Body of pancreas (tissue), 4 donors: ENCODE measurements at regions of chr9 and their contacts with region 1.

Region 1: DNA sequence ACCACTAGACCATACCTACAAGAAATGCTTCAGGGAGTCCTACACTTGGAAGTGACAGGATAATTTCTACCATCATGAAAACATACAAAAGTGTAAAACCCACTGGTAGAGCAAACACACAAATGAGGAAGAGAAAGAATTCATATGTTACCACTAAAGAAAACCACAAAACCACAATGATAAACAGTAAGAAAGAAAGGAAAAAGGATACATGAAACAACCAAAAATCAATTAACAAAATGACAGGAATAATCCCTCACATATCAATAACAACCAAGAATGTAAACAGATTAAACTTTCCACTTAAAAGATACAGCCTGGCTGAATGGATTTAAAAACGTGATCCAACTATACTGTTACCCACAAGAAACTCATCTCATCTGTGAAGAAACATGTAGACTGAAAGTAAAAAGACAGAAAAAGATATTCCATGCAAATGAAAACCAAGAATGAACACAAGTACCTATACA is 83.4 kb downstream of the LPAR1 start:
- DNase-seq: no peak
- ATAC-seq: no peak
- H3K4me3 ChIP-seq: no peak overlapping the region
- H3K27ac ChIP-seq: no peak overlapping the region
- H3K4me1 ChIP-seq: no peaks in the 10 kb centered on the region
- H3K27me3 ChIP-seq: no peaks in the 10 kb centered on the region
- CTCF ChIP-seq: no peak
- POLR2A ChIP-seq: no peak

Region 2: GRCh38 chr9:110179734-110180133 is 775.1 kb before region 1 on chr9:
- intact Hi-C with region 1: loop called (anchors 10 kb)
- DNase-seq: no peak
- ATAC-seq: no peak
- H3K4me3 ChIP-seq: no peak overlapping the region
- H3K27ac ChIP-seq: no peak overlapping the region
- H3K4me1 ChIP-seq: peaks cover 19% of the 10 kb centered on the region
- H3K27me3 ChIP-seq: no peaks in the 10 kb centered on the region
- CTCF ChIP-seq: no peak
- POLR2A ChIP-seq: no peak

Region 3: GRCh38 chr9:110842169-110842568 is 112.7 kb before region 1 on chr9:
- intact Hi-C with region 1: no loop called
- DNase-seq: peak in 3 of 4 donors; percentile 7 to 18 (median 14)
- ATAC-seq: no peak
- H3K4me3 ChIP-seq: no peak overlapping the region
- H3K27ac ChIP-seq: no peak overlapping the region
- H3K4me1 ChIP-seq: no peaks in the 10 kb centered on the region
- H3K27me3 ChIP-seq: no peaks in the 10 kb centered on the region
- CTCF ChIP-seq: peak in 5 of 7 experiments; percentile 9 to 50 (median 41)
- POLR2A ChIP-seq: no peak

Region 4: GRCh38 chr9:110869931-110870330 is 84.9 kb before region 1 on chr9:
- intact Hi-C with region 1: loop called (anchors 10 kb)
- DNase-seq: no peak
- ATAC-seq: no peak
- H3K4me3 ChIP-seq: no peak overlapping the region
- H3K27ac ChIP-seq: no peak overlapping the region
- H3K4me1 ChIP-seq: no peaks in the 10 kb centered on the region
- H3K27me3 ChIP-seq: no peaks in the 10 kb centered on the region
- CTCF ChIP-seq: no peak
- POLR2A ChIP-seq: no peak